ENCODE measurements at regions of chr14 and their contacts with region 1.

Region 1: DNA sequence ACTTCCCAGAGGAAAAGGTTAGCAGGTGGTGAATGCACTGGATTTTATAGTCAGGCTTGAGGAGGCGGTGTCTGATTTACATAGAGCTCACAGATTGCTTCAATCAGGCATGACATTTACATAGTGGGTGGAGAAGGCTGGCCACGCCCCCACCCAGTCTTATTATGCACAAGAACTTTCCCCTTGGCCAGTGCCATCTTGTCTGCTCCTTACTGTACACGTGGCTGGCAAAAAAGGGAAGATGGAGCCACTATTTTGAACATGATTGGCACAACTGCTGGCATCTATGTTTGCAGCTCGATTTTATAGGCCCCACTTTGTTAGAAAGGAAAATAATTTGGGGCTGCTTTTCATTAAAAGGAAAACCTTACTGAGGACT is 10.9 kb upstream of the LGMN start:
- DNase-seq: no peak
- ATAC-seq: peak; percentile 69
- H3K4me3 ChIP-seq: no peak overlapping the region
- H3K27ac ChIP-seq: peak overlapping the region; percentile 34
- H3K4me1 ChIP-seq: peaks cover 23% of the 10 kb centered on the region
- H3K27me3 ChIP-seq: no peaks in the 10 kb centered on the region
- CTCF ChIP-seq: no peak
- EP300 ChIP-seq: no peak
- POLR2A ChIP-seq: no peak
- RAD21 ChIP-seq: no peak

Region 2: GRCh38 chr14:91367173-91368171 is 1391.8 kb before region 1 on chr14:
- CTCF ChIA-PET with region 1: no interaction called
- POLR2A ChIA-PET with region 1: no interaction called
- RAD21 ChIA-PET with region 1: no interaction called
- SMC1A ChIA-PET with region 1: no interaction called
- in situ Hi-C with region 1: loop called (anchors 25 kb)
- intact Hi-C with region 1: no loop called
- DNase-seq: peak; percentile 82
- ATAC-seq: peak; percentile 61
- H3K4me3 ChIP-seq: peak overlapping the region; percentile 61; the same call in 1 of the 2 replicates
- H3K27ac ChIP-seq: peak overlapping the region; percentile 85
- H3K4me1 ChIP-seq: peaks cover 96% of the 10 kb centered on the region
- H3K27me3 ChIP-seq: no peaks in the 10 kb centered on the region
- CTCF ChIP-seq: no peak
- EP300 ChIP-seq: peak; percentile 93 to 98
- POLR2A ChIP-seq: peak; percentile 53; the same call in 1 of the 2 replicates
- RAD21 ChIP-seq: no peak

Region 3: DNA sequence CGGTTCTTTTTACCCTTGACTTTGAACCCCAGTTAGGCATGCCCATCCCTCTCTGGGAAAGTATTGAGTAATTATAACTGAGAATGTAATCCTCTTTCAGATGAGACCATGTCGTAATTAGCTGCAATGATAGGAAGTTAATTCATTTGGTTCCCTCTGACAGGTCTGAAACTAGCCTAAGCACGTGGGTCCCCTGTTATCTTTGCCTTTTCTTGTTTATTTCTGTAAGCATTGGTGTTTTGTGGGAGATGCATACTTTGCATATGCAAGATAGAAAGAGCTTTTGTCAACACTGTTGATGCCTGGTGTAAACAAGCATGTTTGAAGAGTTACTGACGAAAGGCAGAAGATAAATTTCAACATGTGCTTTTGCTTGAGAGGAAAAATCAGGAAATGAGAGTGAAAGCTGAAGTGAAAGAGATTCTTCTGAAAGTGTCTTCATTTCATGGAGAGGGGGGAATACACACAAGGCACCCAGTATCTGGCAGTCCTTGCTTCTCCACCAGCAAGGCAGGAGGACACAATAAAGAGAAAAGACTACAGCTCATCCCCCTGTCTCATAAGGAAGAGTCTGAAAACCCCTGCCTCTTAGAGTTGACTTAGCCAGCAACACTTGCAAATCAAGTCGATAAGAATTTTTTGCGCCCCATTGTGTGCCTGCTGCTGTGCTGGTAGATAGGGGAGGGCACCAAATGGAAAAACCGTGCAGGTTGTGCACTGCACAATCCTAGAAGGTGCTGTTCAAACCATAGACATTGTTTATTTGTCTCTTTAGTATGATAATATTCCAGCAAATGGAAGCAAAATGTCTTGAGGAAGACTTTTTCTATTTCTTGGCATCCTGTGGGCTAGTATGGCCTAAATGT is 358.5 kb before region 1 on chr14:
- CTCF ChIA-PET with region 1: no interaction called
- POLR2A ChIA-PET with region 1: no interaction called
- RAD21 ChIA-PET with region 1: no interaction called
- SMC1A ChIA-PET with region 1: no interaction called
- in situ Hi-C with region 1: no loop called
- intact Hi-C with region 1: no loop called
- DNase-seq: peak; percentile 82
- ATAC-seq: peak; percentile 87
- H3K4me3 ChIP-seq: no peak overlapping the region; the same call in 1 of the 2 replicates
- H3K27ac ChIP-seq: peak overlapping the region; percentile 59
- H3K4me1 ChIP-seq: peaks cover 22% of the 10 kb centered on the region
- H3K27me3 ChIP-seq: no peaks in the 10 kb centered on the region
- CTCF ChIP-seq: no peak
- EP300 ChIP-seq: peak; percentile 64 to 93; a peak in 3 of 4 replicates
- POLR2A ChIP-seq: no peak
- RAD21 ChIP-seq: no peak

Region 4: GRCh38 chr14:92880869-92881289 is 121.6 kb after region 1 on chr14:
- CTCF ChIA-PET with region 1: no interaction called
- POLR2A ChIA-PET with region 1: no interaction called
- RAD21 ChIA-PET with region 1: no interaction called
- SMC1A ChIA-PET with region 1: no interaction called
- in situ Hi-C with region 1: no loop called
- intact Hi-C with region 1: no loop called
- DNase-seq: no peak
- ATAC-seq: no peak
- H3K4me3 ChIP-seq: no peak overlapping the region
- H3K27ac ChIP-seq: no peak overlapping the region
- H3K4me1 ChIP-seq: no peaks in the 10 kb centered on the region
- H3K27me3 ChIP-seq: peaks cover 0 to 3% of the 10 kb centered on the region in 2 experiments; a peak in 1 of 4 replicates
- CTCF ChIP-seq: peak in 2 of 3 experiments; percentile 9 to 27; a peak in 1 of 6 replicates
- EP300 ChIP-seq: no peak
- POLR2A ChIP-seq: no peak
- RAD21 ChIP-seq: peak; percentile 38; the same call in 1 of the 2 replicates

Region 5: DNA sequence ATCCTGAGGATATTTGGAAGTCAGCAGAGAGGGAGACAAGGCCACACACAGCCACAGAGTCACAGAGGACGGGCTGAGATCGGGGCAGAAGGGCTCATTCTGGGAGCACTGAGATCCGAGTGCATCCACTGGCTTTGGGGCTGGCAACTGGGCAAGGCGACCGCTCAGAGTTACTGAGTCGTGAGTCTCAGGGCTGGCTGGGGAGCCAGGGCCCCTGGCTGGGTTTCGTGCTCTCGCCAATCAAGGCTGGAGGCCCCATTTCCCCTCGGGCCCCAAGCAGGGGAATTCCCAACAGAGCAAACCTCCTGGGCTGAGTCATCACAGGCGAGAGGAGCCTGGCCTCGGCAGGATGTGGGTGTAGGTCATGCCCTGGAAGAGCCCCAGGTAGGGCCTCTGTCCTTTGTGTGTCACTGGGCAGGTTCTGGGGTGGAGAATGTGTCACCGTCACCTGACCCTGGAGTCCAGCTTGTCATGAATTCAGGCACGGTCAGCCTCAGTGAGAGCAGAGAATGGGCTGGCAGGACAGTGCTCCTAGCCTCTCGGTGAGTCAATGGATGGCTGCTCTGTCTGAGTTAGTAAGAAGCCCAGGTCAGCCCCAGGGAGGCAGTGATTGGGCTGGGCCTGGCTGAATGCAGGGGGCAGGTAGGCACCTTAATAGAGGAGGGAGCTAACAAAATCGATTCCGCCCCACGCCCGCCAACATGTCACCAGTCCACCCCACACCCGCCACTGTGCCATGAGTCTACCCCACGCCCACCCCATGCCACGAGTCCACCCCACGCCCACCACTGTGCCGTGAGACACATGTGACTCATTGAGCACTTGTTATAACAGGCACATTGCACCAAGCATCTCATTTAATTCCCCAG is 1200.2 kb after region 1 on chr14:
- CTCF ChIA-PET with region 1: no interaction called
- POLR2A ChIA-PET with region 1: no interaction called
- RAD21 ChIA-PET with region 1: no interaction called
- SMC1A ChIA-PET with region 1: no interaction called
- in situ Hi-C with region 1: loop called (anchors 25 kb)
- intact Hi-C with region 1: no loop called
- DNase-seq: peak; percentile 90
- ATAC-seq: peak; percentile 82
- H3K4me3 ChIP-seq: peak overlapping the region; percentile 11; the same call in 1 of the 2 replicates
- H3K27ac ChIP-seq: peak overlapping the region; percentile 90
- H3K4me1 ChIP-seq: peaks cover 95% of the 10 kb centered on the region
- H3K27me3 ChIP-seq: no peaks in the 10 kb centered on the region
- CTCF ChIP-seq: no peak
- EP300 ChIP-seq: peak; percentile 98 to 99
- POLR2A ChIP-seq: peak; percentile 91
- RAD21 ChIP-seq: no peak